ENCODE measurements at regions of chr15 and their contacts with region 1.

Region 1: DNA sequence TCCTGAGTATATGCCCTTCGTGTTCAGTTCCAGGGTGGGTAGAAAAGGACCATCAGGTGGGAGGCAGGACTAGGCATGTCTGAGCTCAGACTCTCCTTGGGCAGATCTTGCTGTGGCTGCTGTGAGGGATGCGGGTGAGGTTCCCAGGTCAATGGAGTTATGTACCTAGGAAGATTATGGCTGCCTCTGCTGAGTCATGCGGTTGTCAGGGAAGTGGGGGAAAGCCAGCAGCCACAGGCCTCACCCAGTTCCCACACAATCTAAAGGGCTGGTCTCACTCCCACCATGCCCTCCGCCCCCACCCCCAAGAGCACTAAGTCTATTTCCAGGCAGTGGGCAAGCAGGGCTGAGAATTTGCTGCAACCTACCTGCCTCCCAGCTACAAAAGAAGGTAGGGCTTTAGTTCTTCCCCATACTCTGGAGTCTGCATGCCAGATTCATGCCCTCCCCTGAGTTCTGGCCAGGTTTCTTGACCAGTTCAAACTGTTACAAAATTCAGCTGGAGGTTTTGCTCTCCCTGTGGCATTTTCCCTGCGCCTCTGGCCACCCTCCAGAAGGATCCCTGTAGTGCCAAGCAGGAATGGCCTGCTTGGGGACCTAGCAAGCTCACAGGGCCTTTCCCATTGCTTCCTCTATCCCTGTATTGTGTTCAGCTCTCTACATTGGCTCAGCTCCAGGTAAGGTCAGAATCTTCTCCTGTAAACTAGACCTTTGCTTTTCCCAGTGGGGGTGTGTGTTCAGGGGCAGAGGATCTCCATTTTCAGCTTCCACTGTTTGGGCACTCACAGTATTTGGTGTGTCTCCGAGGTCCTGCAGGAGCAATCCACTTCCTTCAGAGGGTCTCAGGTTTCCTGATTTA is 12.7 kb upstream of the TMCO5A start:
- DNase-seq: peak; percentile 36 to 58
- H3K4me3 ChIP-seq: no peak overlapping the region
- H3K27ac ChIP-seq: peak overlapping the region; percentile 71
- H3K4me1 ChIP-seq: peaks cover 24% of the 10 kb centered on the region
- H3K27me3 ChIP-seq: no peaks in the 10 kb centered on the region
- CTCF ChIP-seq: no peak

Region 2: DNA sequence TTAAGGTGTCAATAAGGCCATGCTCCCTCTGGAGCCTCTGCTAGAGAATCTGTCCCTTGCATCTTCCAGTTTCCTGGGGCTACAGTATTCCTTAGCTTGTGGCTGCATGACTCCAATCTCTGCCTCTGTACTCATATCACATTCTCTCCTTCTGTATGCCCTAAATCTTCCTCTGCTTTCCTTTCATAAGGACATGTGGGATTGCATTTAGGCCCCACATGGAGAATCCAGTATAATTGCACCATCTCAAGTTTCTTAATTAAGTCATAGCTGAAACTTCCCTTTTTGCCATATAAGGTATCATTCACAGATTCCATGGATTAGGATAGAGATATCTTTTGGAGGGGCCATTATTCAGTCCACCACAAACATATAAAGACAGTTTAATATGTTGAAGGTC is 397.2 kb before region 1 on chr15:
- CTCF ChIA-PET with region 1: no interaction called
- POLR2A ChIA-PET with region 1: interaction called, 11 read pairs
- intact Hi-C with region 1: no loop called
- DNase-seq: no peak
- H3K4me3 ChIP-seq: no peak overlapping the region
- H3K27ac ChIP-seq: no peak overlapping the region
- H3K4me1 ChIP-seq: no peaks in the 10 kb centered on the region
- H3K27me3 ChIP-seq: no peaks in the 10 kb centered on the region
- CTCF ChIP-seq: no peak